CD4-positive, alpha-beta T cell (primary cell): ENCODE measurements at regions of chr17 and their contacts with region 1.

Region 1: GRCh38 chr17:55072898-55073297 is 104.3 kb downstream of the STXBP4 start:
- DNase-seq: peak in 4 of 14 experiments; percentile 7 to 78 (median 69)
- ATAC-seq: peak; percentile 84
- H3K4me3 ChIP-seq: no peak overlapping the region
- H3K4me3 Mint-ChIP-seq: peak overlapping the region; percentile 2
- H3K27ac ChIP-seq: peak overlapping the region in 1 of 2 donors; percentile 73
- H3K27ac Mint-ChIP-seq: peak overlapping the region; percentile 88
- H3K4me1 ChIP-seq: peaks cover 8% of the 10 kb centered on the region
- H3K4me1 Mint-ChIP-seq: peaks cover 17% of the 10 kb centered on the region
- H3K27me3 ChIP-seq: no peaks in the 10 kb centered on the region
- H3K27me3 Mint-ChIP-seq: no peaks in the 10 kb centered on the region
- CTCF ChIP-seq: no peak

Region 2: DNA sequence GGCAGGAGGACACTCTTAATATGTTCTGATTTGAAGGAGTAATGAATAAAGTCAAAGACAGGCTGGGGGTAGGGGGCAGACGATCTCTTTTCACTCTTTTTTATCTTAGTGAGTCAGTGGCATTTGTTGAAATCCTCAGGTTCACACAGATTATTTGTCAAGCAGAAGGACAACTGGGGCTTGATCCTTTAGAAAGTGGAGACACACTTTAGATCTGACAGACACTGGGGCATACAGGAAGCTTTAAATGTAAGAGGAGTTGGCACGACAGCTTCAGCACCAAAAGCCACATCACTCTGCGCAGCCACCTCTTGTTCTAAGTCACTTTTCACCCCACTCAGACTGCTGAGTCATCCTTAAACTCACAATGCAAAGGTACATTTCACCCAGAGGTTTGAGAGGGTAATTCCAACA is 17.2 kb after region 1 on chr17:
- CTCF ChIA-PET with region 1: interaction called, 3 read pairs
- POLR2A ChIA-PET with region 1: interaction called, 6 read pairs
- intact Hi-C with region 1: loop called in 1 of 2 experiments (anchors 2 kb)
- DNase-seq: peak in 13 of 14 experiments; percentile 6 to 82 (median 30)
- ATAC-seq: peak; percentile 85
- H3K4me3 ChIP-seq: no peak overlapping the region
- H3K4me3 Mint-ChIP-seq: no peak overlapping the region
- H3K27ac ChIP-seq: peak overlapping the region in 1 of 2 donors; percentile 41
- H3K27ac Mint-ChIP-seq: peak overlapping the region; percentile 82
- H3K4me1 ChIP-seq: peaks cover 12% of the 10 kb centered on the region
- H3K4me1 Mint-ChIP-seq: peaks cover 28% of the 10 kb centered on the region
- H3K27me3 ChIP-seq: no peaks in the 10 kb centered on the region
- H3K27me3 Mint-ChIP-seq: no peaks in the 10 kb centered on the region
- CTCF ChIP-seq: no peak